GM12878 (cell line): ENCODE measurements at regions of chr6 and their contacts with region 1.

Region 1: DNA sequence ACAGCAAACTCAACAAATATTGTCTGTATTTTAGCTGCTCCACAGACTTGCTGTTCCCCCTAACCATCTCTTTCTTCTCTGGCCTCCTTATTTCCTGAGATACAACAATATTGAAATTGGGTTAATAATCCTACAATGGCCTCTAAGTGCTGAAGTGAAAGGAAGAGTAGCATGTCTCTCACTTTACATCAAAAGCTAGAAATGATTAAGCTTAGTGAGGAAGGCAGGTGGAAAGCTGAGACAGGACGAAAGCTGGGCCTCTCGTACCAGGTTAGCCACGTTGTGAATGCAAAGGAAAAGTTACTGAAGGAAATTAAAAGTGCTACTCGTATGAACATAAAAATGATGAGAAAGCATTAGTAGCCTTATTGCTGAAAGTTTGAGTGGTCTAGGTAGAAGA is 63.8 kb downstream of the ELOVL5 start:
- DNase-seq: no peak
- ATAC-seq: peak; percentile 76
- H3K4me3 ChIP-seq: no peak overlapping the region
- H3K27ac ChIP-seq: no peak overlapping the region
- H3K4me1 ChIP-seq: peaks cover 28% of the 10 kb centered on the region
- H3K27me3 ChIP-seq: no peaks in the 10 kb centered on the region
- CTCF ChIP-seq: no peak
- EP300 ChIP-seq: peak in 1 of 2 experiments; percentile 33; a peak in 1 of 4 replicates
- POLR2A ChIP-seq: no peak
- RAD21 ChIP-seq: no peak

Region 2: DNA sequence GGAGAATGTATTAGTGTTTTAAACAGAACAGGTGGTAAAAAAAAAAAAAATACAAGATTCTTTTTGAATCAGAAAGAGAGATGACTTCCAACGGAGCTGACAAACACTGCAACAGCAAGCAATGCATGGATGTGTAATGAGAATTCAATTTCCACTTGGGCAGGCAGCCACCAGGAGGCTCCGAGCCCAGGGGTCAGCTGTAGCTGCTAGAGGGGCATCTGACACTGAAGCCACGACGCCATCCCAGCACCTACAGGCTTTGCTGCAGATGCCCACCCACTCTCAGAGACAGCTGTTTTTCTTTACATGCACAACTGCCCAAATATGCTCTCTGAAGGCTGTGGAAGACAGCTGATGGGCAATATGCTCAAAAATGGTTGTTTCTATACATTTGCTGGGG is 11.5 kb before region 1 on chr6:
- CTCF ChIA-PET with region 1: interaction called, 5 read pairs
- POLR2A ChIA-PET with region 1: interaction called, 3 read pairs
- RAD21 ChIA-PET with region 1: interaction called, 3 read pairs
- SMC1A ChIA-PET with region 1: interaction called, 20 read pairs
- in situ Hi-C with region 1: no loop called
- intact Hi-C with region 1: no loop called
- DNase-seq: no peak
- ATAC-seq: no peak; the same call in 2 of the 3 replicates
- H3K4me3 ChIP-seq: no peak overlapping the region
- H3K27ac ChIP-seq: no peak overlapping the region
- H3K4me1 ChIP-seq: no peaks in the 10 kb centered on the region
- H3K27me3 ChIP-seq: no peaks in the 10 kb centered on the region
- CTCF ChIP-seq: no peak
- EP300 ChIP-seq: no peak
- POLR2A ChIP-seq: no peak
- RAD21 ChIP-seq: no peak

Region 3: DNA sequence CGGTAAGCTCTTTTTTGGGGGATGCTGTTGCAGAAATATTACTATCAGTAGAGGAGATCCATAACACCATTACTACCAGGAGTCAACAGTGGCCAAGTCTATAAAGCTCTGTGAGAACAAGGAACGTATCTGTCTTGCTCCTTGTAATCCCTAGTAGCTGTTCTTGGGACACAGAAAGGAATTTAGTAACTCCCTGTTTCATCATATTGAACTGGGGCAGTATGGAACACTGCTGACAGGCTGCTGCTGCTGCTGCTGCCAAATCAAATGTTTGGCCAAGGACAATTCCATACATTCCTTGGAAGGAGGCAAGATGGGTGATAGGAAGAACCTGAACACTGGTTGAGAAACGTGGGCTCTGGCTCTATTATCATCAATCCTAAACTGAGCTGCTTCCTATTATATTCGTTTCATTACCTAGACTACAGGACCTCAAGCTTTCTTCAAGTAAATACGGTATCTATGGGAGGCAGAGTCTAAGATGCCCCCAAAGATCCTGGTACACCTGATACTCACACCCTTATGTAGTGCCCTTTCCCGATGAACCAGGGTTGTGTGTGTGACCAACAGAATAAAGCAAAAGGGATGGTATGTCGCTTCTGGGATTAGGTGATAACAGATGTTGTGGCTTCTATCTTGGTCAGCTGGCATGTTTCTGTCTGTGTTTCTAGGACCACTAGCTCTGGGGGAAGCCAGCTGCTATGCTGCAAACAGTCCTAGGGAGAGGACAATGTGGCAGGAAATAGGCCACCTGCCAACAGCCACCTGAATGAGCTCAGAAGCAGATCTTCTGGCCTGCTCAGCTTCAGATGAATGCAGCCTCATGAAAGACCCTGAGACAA is 24.4 kb after region 1 on chr6:
- CTCF ChIA-PET with region 1: interaction called, 29 read pairs
- POLR2A ChIA-PET with region 1: interaction called, 7 read pairs
- RAD21 ChIA-PET with region 1: interaction called, 14 read pairs
- SMC1A ChIA-PET with region 1: interaction called, 24 read pairs
- in situ Hi-C with region 1: no loop called
- intact Hi-C with region 1: no loop called
- DNase-seq: peak; percentile 42
- ATAC-seq: peak; percentile 58
- H3K4me3 ChIP-seq: no peak overlapping the region
- H3K27ac ChIP-seq: peak overlapping the region; percentile 10
- H3K4me1 ChIP-seq: peaks cover 39% of the 10 kb centered on the region
- H3K27me3 ChIP-seq: no peaks in the 10 kb centered on the region
- CTCF ChIP-seq: no peak
- EP300 ChIP-seq: peak in 1 of 2 experiments; percentile 19; a peak in 1 of 4 replicates
- POLR2A ChIP-seq: peak; percentile 28; the same call in 1 of the 2 replicates
- RAD21 ChIP-seq: no peak

Region 4: DNA sequence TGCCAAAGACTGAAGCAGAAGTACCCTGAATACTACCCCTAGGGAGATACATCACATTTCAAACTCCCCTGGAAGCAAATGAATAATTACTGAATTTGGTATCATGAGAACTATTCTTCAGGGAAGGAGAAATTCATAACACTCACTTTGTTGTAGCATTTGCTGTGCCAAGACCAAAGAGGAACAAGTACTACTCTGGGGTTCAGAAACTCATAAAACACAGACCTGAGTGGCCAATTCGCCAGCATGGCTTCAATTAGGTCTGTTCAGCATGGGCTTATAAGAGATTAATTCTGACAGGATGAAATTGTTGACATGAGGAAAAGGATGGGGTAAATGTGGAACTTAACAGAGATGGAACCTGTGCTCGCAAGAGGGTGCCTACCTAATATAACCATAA is 57.3 kb after region 1 on chr6:
- CTCF ChIA-PET with region 1: interaction called, 4 read pairs
- POLR2A ChIA-PET with region 1: interaction called, 8 read pairs
- RAD21 ChIA-PET with region 1: interaction called, 22 read pairs
- SMC1A ChIA-PET with region 1: interaction called, 27 read pairs
- in situ Hi-C with region 1: no loop called
- intact Hi-C with region 1: loop called (anchors 2 kb)
- DNase-seq: no peak
- ATAC-seq: peak; percentile 28
- H3K4me3 ChIP-seq: peak overlapping the region; percentile 5; the same call in 1 of the 2 replicates
- H3K27ac ChIP-seq: no peak overlapping the region
- H3K4me1 ChIP-seq: peaks cover 23% of the 10 kb centered on the region
- H3K27me3 ChIP-seq: no peaks in the 10 kb centered on the region
- CTCF ChIP-seq: no peak
- EP300 ChIP-seq: no peak
- POLR2A ChIP-seq: no peak
- RAD21 ChIP-seq: no peak